ENCODE measurements at regions of chr10 and their contacts with region 1.

Region 1: GRCh38 chr10:89783406-89783805 is 82.0 kb downstream of the KIF20B start:
- DNase-seq: peak; percentile 51
- H3K4me3 ChIP-seq: no peak overlapping the region
- H3K27ac ChIP-seq: no peak overlapping the region
- H3K4me1 ChIP-seq: peaks cover 10% of the 10 kb centered on the region
- H3K27me3 ChIP-seq: no peaks in the 10 kb centered on the region
- CTCF ChIP-seq: no peak
- POLR2A ChIP-seq: no peak

Region 2: GRCh38 chr10:89773081-89773480 is 10.3 kb before region 1 on chr10:
- CTCF ChIA-PET with region 1: interaction called, 10 read pairs
- POLR2A ChIA-PET with region 1: no interaction called
- dilution Hi-C with region 1: no loop called
- intact Hi-C with region 1: no loop called
- DNase-seq: no peak
- H3K4me3 ChIP-seq: no peak overlapping the region
- H3K27ac ChIP-seq: no peak overlapping the region
- H3K4me1 ChIP-seq: no peaks in the 10 kb centered on the region
- H3K27me3 ChIP-seq: no peaks in the 10 kb centered on the region
- CTCF ChIP-seq: no peak
- POLR2A ChIP-seq: no peak